AG04449 (cell line): ENCODE measurements at regions of chr10 and their contacts with region 1.

Region 1: DNA sequence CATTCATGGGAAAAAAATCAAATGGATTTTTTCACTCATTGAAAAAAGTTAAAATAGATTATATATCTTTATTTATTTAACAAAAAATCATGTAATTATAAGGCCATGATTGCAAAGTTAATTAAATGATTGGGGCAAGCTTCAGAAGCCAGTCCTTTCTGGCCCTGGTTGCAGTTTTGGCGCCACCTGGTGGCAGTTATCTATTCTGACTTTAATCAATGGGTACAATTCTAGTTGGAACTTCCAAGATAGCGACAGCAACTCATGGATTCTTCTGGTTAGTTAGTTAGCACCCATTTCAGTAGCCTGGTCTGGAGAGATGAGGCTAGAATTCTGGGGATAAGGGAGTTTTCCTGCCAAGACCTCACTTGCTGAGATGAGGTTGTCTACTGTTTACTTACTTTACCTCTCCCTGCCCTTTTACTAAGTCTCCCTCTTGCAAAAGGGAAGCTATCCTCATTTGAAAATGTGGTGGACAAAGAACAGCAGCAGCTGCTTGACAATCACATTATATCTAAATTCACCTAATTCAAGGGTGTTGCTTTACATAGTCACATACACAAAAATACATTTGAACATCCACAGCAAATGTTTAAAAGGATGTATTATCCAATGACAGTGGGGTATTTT is 42.3 kb downstream of the NOC3L start:
- DNase-seq: no peak
- H3K4me3 ChIP-seq: no peak overlapping the region
- CTCF ChIP-seq: peak; percentile 55

Region 2: GRCh38 chr10:93916257-93917063 is 403.9 kb before region 1 on chr10:
- CTCF ChIA-PET with region 1: interaction called, 209 read pairs
- POLR2A ChIA-PET with region 1: no interaction called
- DNase-seq: no peak
- H3K4me3 ChIP-seq: no peak overlapping the region
- CTCF ChIP-seq: peak; percentile 31

Region 3: GRCh38 chr10:94091649-94092048 is 228.8 kb before region 1 on chr10:
- CTCF ChIA-PET with region 1: interaction called, 14 read pairs
- POLR2A ChIA-PET with region 1: no interaction called
- DNase-seq: no peak
- H3K4me3 ChIP-seq: no peak overlapping the region
- CTCF ChIP-seq: no peak

Region 4: GRCh38 chr10:94287336-94287735 is 33.1 kb before region 1 on chr10:
- CTCF ChIA-PET with region 1: interaction called, 33 read pairs
- POLR2A ChIA-PET with region 1: no interaction called
- DNase-seq: peak; percentile 46
- H3K4me3 ChIP-seq: no peak overlapping the region
- CTCF ChIP-seq: no peak

Region 5: GRCh38 chr10:94299417-94299816 is 21.0 kb before region 1 on chr10:
- CTCF ChIA-PET with region 1: interaction called, 72 read pairs
- POLR2A ChIA-PET with region 1: no interaction called
- DNase-seq: no peak
- H3K4me3 ChIP-seq: no peak overlapping the region
- CTCF ChIP-seq: no peak

Region 6: DNA sequence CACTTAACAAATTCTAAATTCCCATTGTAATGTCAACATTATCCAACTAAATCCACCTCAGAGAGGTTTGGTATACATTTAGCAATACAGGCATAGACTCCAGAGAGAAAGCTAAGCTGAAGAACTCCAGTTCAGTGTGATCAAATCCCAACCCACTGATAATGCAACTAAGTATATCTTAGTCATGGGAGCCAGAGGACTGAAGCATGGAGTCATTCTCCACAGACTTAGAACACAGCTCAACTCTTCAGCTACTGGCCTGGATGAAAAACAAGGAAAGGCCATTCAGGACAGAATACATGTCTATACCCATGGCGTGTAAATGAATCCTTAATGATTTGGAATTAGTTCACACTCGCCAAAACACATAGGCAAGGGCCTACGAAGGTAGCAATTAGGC is 14.5 kb after region 1 on chr10:
- CTCF ChIA-PET with region 1: interaction called, 85 read pairs
- POLR2A ChIA-PET with region 1: no interaction called
- DNase-seq: no peak
- H3K4me3 ChIP-seq: no peak overlapping the region
- CTCF ChIP-seq: no peak

Region 7: DNA sequence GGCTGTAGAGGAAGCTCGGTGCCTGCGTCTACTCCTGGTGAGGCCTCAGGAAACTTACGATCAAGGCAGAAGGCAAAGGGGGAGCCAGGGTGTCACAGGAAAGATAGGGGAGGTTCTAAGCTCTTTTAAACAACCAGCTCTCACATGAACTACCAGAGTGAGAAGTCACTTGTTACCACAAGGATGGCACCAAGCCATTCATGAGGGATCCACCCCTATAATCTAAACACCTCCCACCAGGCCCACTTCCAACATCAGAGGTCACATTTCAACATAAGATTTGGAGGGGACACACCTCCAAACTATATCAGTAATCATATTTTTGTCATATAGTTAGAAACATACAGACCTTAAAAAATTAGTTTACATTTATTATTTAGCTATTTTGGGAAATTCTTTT is 32.9 kb after region 1 on chr10:
- CTCF ChIA-PET with region 1: interaction called, 12 read pairs
- POLR2A ChIA-PET with region 1: no interaction called
- DNase-seq: no peak
- H3K4me3 ChIP-seq: no peak overlapping the region
- CTCF ChIP-seq: no peak